Esophagus muscularis mucosa (tissue), 4 donors: ENCODE measurements at regions of chr9 and their contacts with region 1.

Region 1: GRCh38 chr9:122991370-122991830 is 42.1 kb upstream of the GPR21 start:
- DNase-seq: no peak
- H3K4me3 ChIP-seq: no peak overlapping the region
- H3K27ac ChIP-seq: peak overlapping the region in 3 of 4 donors; percentile 3 to 15 (median 8)
- H3K4me1 ChIP-seq: peaks cover 0 to 16% (median 2%) of the 10 kb centered on the region in 4 donors
- H3K27me3 ChIP-seq: no peaks in the 10 kb centered on the region
- CTCF ChIP-seq: peak; percentile 71 to 78 (median 75)
- EP300 ChIP-seq: no peak
- POLR2A ChIP-seq: no peak

Region 2: GRCh38 chr9:122912964-122913673 is 78.3 kb before region 1 on chr9 and contains the start of gene ZBTB6:
- intact Hi-C with region 1: loop called (anchors 5 kb)
- DNase-seq: peak; percentile 93
- H3K4me3 ChIP-seq: peak within 1 kb of the TSS; percentile 78 to 85 (median 78)
- H3K27ac ChIP-seq: peak within 1 kb of the TSS; percentile 84 to 90 (median 86)
- H3K4me1 ChIP-seq: peaks cover 13 to 21% (median 17%) of the 10 kb centered on the region in 4 donors
- H3K27me3 ChIP-seq: no peaks in the 10 kb centered on the region
- CTCF ChIP-seq: no peak
- EP300 ChIP-seq: no peak
- POLR2A ChIP-seq: no peak
- total RNA-seq, gene ZBTB6: 6.5 to 12.9 (median 9.5) TPM

Region 3: GRCh38 chr9:122954253-122954691 is 37.1 kb before region 1 on chr9:
- intact Hi-C with region 1: no loop called
- DNase-seq: no peak
- H3K4me3 ChIP-seq: no peak overlapping the region
- H3K27ac ChIP-seq: peak overlapping the region; percentile 24 to 55 (median 48)
- H3K4me1 ChIP-seq: peaks cover 17 to 83% (median 75%) of the 10 kb centered on the region in 4 donors
- H3K27me3 ChIP-seq: no peaks in the 10 kb centered on the region
- CTCF ChIP-seq: no peak
- EP300 ChIP-seq: no peak
- POLR2A ChIP-seq: no peak